Gastrocnemius medialis (tissue), 4 donors: ENCODE measurements at regions of chr19 and their contacts with region 1.

Region 1: DNA sequence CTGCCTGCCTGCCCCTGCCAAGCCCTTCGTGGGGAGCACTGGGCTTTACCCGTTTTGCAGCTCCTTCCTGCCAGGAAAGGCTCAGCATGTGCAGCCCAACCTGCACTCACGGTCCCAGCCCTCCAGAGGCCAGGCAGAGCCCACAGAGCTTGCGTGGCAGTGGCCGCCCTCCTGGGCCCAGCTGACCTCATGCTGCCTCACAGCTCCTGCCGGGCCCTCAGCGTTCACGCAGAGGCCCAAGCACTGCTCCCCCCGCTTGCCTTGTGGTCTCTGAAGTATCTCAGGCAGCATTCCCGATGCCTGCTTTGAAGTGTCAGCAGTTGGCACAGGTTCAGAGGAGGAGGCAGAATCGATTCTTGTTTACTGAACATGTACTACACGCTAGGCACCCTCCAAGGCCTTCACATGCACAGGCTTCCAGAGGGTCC is 32.5 kb downstream of the CAPN12 start:
- DNase-seq: peak in 1 of 2 donors; percentile 46
- ATAC-seq: no peak
- H3K4me3 ChIP-seq: no peak overlapping the region
- H3K27ac ChIP-seq: peak overlapping the region; percentile 75 to 96 (median 89)
- H3K4me1 ChIP-seq: peaks cover 77 to 79% of the 10 kb centered on the region in 2 donors
- H3K27me3 ChIP-seq: no peaks in the 10 kb centered on the region
- CTCF ChIP-seq: no peak
- POLR2A ChIP-seq: no peak

Region 2: DNA sequence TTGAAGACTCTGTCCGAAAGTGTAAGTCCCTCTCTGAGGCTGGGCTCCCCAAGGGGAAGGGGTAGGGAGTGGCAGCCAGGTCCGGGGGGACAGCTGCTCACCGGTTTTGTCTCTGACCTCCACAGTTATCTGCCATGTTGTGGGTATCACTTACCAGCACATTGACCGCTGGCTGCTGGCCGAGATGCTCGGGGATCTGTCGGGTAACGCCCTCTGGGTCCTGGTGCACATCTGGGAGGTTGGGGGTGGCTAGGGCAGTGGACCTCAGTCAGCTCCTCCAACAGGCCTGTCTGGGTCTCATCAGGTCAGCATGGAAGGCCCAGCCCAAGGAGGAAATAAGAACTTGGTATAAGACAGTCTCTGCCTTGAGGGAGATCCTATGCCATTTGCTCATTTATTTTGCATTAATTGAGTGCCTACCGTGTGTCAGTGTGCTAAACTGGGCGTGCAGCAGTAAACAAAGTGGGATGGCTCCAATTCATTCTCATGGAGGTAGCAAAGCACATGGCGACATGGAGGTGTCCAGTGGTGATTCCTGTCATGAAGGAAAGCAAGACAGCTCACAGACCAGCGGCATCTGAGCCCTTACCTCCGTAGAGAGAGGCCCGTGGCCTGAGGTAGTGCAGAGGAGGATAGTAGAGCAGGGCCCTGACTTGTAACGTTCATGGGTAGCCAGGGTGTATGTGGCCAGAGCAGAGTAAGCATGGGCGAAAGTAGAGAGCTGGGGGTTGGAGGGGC is 79.1 kb before region 1 on chr19:
- in situ Hi-C with region 1: no loop called
- intact Hi-C with region 1: no loop called
- DNase-seq: no peak
- ATAC-seq: no peak
- H3K4me3 ChIP-seq: no peak overlapping the region
- H3K27ac ChIP-seq: no peak overlapping the region
- H3K4me1 ChIP-seq: peaks cover 0 to 7% of the 10 kb centered on the region in 2 donors
- H3K27me3 ChIP-seq: no peaks in the 10 kb centered on the region
- CTCF ChIP-seq: no peak
- POLR2A ChIP-seq: no peak

Region 3: GRCh38 chr19:38693380-38694223 is 18.1 kb before region 1 on chr19:
- in situ Hi-C with region 1: no loop called
- intact Hi-C with region 1: loop called (anchors 2 kb)
- DNase-seq: no peak
- ATAC-seq: no peak
- H3K4me3 ChIP-seq: no peak overlapping the region
- H3K27ac ChIP-seq: peak overlapping the region; percentile 89 to 98 (median 96)
- H3K4me1 ChIP-seq: peaks cover 87 to 92% of the 10 kb centered on the region in 2 donors
- H3K27me3 ChIP-seq: no peaks in the 10 kb centered on the region
- CTCF ChIP-seq: no peak
- POLR2A ChIP-seq: no peak

Region 4: DNA sequence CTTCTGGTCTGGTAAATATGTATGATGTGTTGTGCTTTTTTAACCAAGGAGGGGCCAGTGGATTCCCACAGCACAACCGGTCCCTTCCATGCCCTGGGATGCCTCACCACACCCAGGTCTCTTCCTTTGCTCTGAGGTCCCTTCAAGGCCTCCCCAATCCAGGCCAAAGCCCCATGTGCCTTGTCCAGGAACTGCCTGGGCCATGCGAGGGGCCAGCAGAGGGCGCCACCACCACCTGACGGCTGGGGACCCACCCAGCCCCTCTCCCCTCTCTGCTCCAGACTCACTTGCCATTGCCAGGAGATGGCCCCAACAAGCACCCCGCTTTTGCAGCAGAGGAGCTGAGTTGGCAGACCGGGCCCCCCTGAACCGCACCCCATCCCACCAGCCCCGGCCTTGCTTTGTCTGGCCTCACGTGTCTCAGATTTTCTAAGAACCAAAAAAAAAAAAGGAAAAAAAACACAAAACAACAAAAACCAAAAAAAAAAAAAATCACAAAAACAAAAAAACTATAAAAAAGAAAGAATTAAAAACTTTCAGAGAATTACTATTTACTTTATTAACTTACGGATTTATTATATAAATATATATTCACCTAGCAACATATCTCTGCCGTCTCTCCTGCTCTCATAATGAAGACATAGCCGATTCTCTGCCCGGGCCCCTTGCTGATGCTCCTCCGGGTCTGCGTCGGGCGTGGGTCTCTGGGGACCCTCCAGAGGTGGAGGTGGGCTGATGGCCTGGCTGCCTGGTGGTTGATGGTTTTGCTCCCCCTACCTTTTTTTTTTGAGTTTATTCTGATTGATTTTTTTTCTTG is 18.1 kb after region 1 on chr19:
- in situ Hi-C with region 1: no loop called
- intact Hi-C with region 1: no loop called
- DNase-seq: peak in 1 of 2 donors; percentile 58
- ATAC-seq: peak in 1 of 2 donors; percentile 45
- H3K4me3 ChIP-seq: no peak overlapping the region
- H3K27ac ChIP-seq: peak overlapping the region; percentile 25 to 54 (median 40)
- H3K4me1 ChIP-seq: peaks cover 7 to 8% of the 10 kb centered on the region in 2 donors
- H3K27me3 ChIP-seq: no peaks in the 10 kb centered on the region
- CTCF ChIP-seq: peak; percentile 71 to 89 (median 76)
- POLR2A ChIP-seq: no peak

Region 5: GRCh38 chr19:38891771-38892170 is 180.0 kb after region 1 on chr19:
- in situ Hi-C with region 1: no loop called
- intact Hi-C with region 1: loop called (anchors 5 kb)
- DNase-seq: no peak
- ATAC-seq: no peak
- H3K4me3 ChIP-seq: no peak overlapping the region
- H3K27ac ChIP-seq: peak overlapping the region; percentile 85 to 96 (median 88)
- H3K4me1 ChIP-seq: peaks cover 54 to 70% of the 10 kb centered on the region in 2 donors
- H3K27me3 ChIP-seq: no peaks in the 10 kb centered on the region
- CTCF ChIP-seq: no peak
- POLR2A ChIP-seq: no peak